K562 (cell line): ENCODE measurements at regions of chr5 and their contacts with region 1.

Region 1: GRCh38 chr5:73519531-73520283 is 21.5 kb downstream of the BTF3 start:
- DNase-seq: peak; percentile 74 to 84 (median 80)
- ATAC-seq: peak; percentile 99
- H3K4me3 ChIP-seq: no peak overlapping the region
- H3K27ac ChIP-seq: no peak overlapping the region
- H3K4me1 ChIP-seq: peaks cover 0 to 2% of the 10 kb centered on the region in 2 experiments; a peak in 1 of 5 replicates
- H3K27me3 ChIP-seq: peaks cover 0 to 6% of the 10 kb centered on the region in 2 experiments; a peak in 2 of 5 replicates
- CTCF ChIP-seq: peak; percentile 88 to 94 (median 88)
- EP300 ChIP-seq: no peak
- POLR2A ChIP-seq: no peak
- RAD21 ChIP-seq: peak; percentile 68 to 85

Region 2: GRCh38 chr5:73498057-73499008 is 21.4 kb before region 1 on chr5 and contains the start of gene BTF3:
- CTCF ChIA-PET with region 1: no interaction called
- POLR2A ChIA-PET with region 1: interaction called, 12 read pairs
- in situ Hi-C with region 1: no loop called
- intact Hi-C with region 1: no loop called
- DNase-seq: peak; percentile 83 to 99 (median 88)
- ATAC-seq: peak; percentile 94
- H3K4me3 ChIP-seq: peak within 1 kb of the TSS; percentile 93
- H3K27ac ChIP-seq: peak within 1 kb of the TSS; percentile 98
- H3K4me1 ChIP-seq: peaks cover 3% of the 10 kb centered on the region in 2 experiments; a peak in 4 of 5 replicates
- H3K27me3 ChIP-seq: no peaks in the 10 kb centered on the region
- CTCF ChIP-seq: no peak
- EP300 ChIP-seq: 0 out of 2 replicates have a peak, but pooled peaks have one; percentile 4
- POLR2A ChIP-seq: peak; percentile 97
- RAD21 ChIP-seq: no peak
- polyA plus RNA-seq, gene BTF3: 1,000 to 1,004 TPM

Region 3: GRCh38 chr5:73540192-73540591 is 20.5 kb after region 1 on chr5:
- CTCF ChIA-PET with region 1: interaction called, 14 read pairs
- POLR2A ChIA-PET with region 1: no interaction called
- in situ Hi-C with region 1: no loop called
- intact Hi-C with region 1: loop called (anchors 1 kb)
- DNase-seq: peak in 1 of 4 experiments; percentile 12
- ATAC-seq: peak; percentile 50; the same call in 2 of the 3 replicates
- H3K4me3 ChIP-seq: no peak overlapping the region
- H3K27ac ChIP-seq: no peak overlapping the region
- H3K4me1 ChIP-seq: peaks cover 0 to 1% of the 10 kb centered on the region in 2 experiments; a peak in 2 of 5 replicates
- H3K27me3 ChIP-seq: no peaks in the 10 kb centered on the region
- CTCF ChIP-seq: no peak
- EP300 ChIP-seq: no peak
- POLR2A ChIP-seq: no peak
- RAD21 ChIP-seq: no peak

Region 4: DNA sequence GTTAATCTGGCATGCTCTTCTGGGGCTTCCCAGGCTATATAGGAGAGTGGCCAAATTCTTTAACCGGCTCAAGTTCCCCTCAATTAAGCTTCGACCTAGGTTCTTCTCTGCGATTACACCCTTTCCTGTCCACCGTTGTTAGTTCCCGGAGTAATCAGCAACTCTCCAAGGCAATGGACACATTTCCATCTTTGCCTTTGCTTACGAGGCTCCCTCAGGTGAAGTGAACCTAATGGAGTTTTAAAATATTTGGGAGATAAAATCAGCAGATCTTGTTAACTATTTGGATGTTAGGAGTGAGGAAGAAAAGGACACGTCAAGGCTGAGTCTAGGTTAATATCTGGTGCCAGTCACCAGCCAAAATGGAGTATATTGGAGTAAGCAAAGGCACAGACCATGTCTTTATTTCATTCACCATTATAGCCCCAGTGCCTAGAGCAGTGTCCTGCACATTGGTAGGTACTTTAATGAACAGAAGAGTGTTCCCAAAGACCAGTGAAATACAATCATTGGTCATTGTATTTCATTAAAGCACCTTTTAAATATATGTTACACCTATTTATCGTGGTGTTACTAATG is 46.4 kb after region 1 on chr5:
- CTCF ChIA-PET with region 1: interaction called, 3 read pairs
- POLR2A ChIA-PET with region 1: interaction called, 3 read pairs
- in situ Hi-C with region 1: no loop called
- intact Hi-C with region 1: loop called (anchors 1 kb)
- DNase-seq: no peak
- ATAC-seq: peak; percentile 51
- H3K4me3 ChIP-seq: peak overlapping the region; percentile 90
- H3K27ac ChIP-seq: peak overlapping the region; percentile 78
- H3K4me1 ChIP-seq: peaks cover 0 to 3% of the 10 kb centered on the region in 2 experiments; a peak in 2 of 5 replicates
- H3K27me3 ChIP-seq: no peaks in the 10 kb centered on the region
- CTCF ChIP-seq: no peak
- EP300 ChIP-seq: no peak
- POLR2A ChIP-seq: no peak
- RAD21 ChIP-seq: no peak

Region 5: DNA sequence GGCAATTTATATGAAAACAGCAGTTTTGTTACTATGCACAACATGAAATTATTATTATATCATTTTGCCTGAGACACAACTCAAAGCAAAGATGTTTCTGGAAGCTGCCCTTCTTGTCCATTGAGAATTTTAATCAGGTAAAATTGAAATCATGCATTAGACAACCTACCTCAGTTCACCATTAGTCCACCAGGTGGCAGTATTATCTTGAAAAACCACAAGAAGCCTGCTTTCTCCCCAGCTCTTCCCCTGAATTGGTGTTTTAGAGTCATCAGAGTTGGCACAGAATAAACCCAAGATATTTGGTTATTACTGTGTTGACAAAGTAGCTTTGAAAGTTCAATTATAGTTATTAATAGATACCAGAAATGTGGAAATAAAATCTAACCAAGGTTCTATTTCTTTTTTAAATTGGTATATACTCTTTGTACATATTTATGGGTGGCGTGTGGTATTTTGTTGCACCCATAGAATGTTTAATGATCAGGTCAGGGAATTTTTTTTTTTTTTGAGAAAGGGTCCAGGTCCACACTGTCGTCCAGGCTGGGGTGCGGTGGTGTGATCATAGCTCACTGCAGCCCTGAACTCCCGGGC is 71.5 kb after region 1 on chr5:
- CTCF ChIA-PET with region 1: no interaction called
- POLR2A ChIA-PET with region 1: no interaction called
- in situ Hi-C with region 1: no loop called
- intact Hi-C with region 1: loop called (anchors 5 kb)
- DNase-seq: peak; percentile 59 to 81 (median 62)
- ATAC-seq: peak; percentile 89
- H3K4me3 ChIP-seq: no peak overlapping the region
- H3K27ac ChIP-seq: no peak overlapping the region
- H3K4me1 ChIP-seq: no peaks in the 10 kb centered on the region
- H3K27me3 ChIP-seq: no peaks in the 10 kb centered on the region
- CTCF ChIP-seq: peak; percentile 65 to 87 (median 70)
- EP300 ChIP-seq: no peak
- POLR2A ChIP-seq: no peak
- RAD21 ChIP-seq: peak; percentile 90 to 94

Region 6: GRCh38 chr5:73693481-73694061 is 173.9 kb after region 1 on chr5:
- CTCF ChIA-PET with region 1: no interaction called
- POLR2A ChIA-PET with region 1: no interaction called
- in situ Hi-C with region 1: no loop called
- intact Hi-C with region 1: loop called (anchors 10 kb)
- DNase-seq: peak in 1 of 4 experiments; percentile 12
- ATAC-seq: no peak
- H3K4me3 ChIP-seq: no peak overlapping the region
- H3K27ac ChIP-seq: no peak overlapping the region
- H3K4me1 ChIP-seq: no peaks in the 10 kb centered on the region
- H3K27me3 ChIP-seq: peaks cover 0 to 2% of the 10 kb centered on the region in 2 experiments; a peak in 2 of 5 replicates
- CTCF ChIP-seq: peak; percentile 26 to 59 (median 52); a peak in 4 of 6 replicates
- EP300 ChIP-seq: no peak
- POLR2A ChIP-seq: no peak
- RAD21 ChIP-seq: peak; percentile 37 to 39

Region 7: DNA sequence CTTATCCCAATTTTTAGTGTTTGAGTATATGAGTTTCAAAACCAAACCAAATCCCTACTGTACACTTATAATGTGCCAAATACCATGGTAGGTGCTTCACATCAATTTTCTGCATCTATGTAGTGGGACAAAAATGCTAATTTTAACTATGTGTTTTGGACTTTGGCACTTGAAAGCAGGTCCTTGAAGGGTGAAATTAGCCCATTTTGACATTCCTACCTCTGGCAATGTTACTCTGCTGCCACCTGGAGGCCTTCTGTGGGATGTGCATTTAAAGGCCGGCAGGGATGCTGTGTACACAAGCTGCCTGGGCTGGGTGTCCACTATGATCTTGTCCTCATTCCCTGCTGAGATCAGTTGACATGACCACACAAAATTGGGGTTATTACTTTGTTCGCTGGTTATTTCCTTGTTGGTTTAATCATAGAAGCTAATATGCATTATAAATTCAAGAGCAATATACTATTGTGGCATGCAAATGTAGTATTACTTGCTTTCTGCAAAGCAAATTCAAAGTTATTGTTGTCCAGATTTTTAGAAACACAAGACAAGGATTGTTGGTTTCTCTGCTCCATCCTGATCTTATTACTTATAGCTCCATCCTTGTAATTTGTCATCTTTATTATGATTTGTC is 273.1 kb after region 1 on chr5:
- CTCF ChIA-PET with region 1: interaction called, 4 read pairs
- POLR2A ChIA-PET with region 1: no interaction called
- in situ Hi-C with region 1: no loop called
- intact Hi-C with region 1: loop called (anchors 1 kb)
- DNase-seq: peak; percentile 56 to 72 (median 66)
- ATAC-seq: peak; percentile 88
- H3K4me3 ChIP-seq: no peak overlapping the region
- H3K27ac ChIP-seq: no peak overlapping the region
- H3K4me1 ChIP-seq: no peaks in the 10 kb centered on the region
- H3K27me3 ChIP-seq: peaks cover 2 to 9% of the 10 kb centered on the region in 2 experiments; a peak in 2 of 5 replicates
- CTCF ChIP-seq: peak; percentile 89 to 94 (median 90)
- EP300 ChIP-seq: no peak
- POLR2A ChIP-seq: no peak
- RAD21 ChIP-seq: peak; percentile 89 to 95